CD4-positive, alpha-beta memory T cell (primary cell): ENCODE measurements at regions of chr3 and their contacts with region 1.

Region 1: GRCh38 chr3:196073188-196073838 is 8.6 kb downstream of the TFRC start:
- DNase-seq: peak; percentile 76 to 80 (median 78)
- H3K4me3 ChIP-seq: no peak overlapping the region
- H3K4me3 Mint-ChIP-seq: peak overlapping the region in 1 of 8 donors; percentile 16
- H3K27ac ChIP-seq: no peak overlapping the region
- H3K27ac Mint-ChIP-seq: peak overlapping the region; percentile 58 to 93 (median 78)
- H3K4me1 ChIP-seq: peaks cover 38% of the 10 kb centered on the region
- H3K4me1 Mint-ChIP-seq: peaks cover 24 to 32% (median 28%) of the 10 kb centered on the region in 4 donors
- H3K27me3 ChIP-seq: no peaks in the 10 kb centered on the region
- H3K27me3 Mint-ChIP-seq: no peaks in the 10 kb centered on the region

Region 2: DNA sequence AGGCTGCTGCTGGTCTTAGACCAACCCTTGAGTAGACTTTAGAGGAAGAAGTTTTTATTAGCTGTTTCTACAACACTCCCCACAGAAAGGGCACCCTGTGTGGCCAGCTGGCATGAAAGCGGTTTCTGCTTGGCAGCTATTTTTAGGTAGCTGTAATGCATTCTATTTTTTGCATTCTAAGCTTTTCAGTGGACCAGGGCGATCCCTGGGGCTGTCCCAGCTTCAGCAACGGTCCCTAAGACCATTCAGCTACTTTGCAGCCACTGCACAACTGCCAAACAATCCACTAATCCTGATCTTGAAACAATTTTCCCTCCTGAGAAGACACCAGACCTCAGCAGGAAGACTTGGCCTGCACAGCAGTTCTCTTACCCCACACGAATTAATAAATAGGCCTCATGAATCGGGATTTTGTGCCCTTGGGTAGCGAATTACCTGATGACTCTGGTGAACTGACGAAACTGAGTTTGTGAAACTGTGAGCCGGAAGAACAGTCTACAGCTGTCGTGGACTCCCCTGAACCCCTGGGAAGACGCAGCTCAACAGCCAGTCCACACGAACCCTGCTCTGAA is 23.2 kb after region 1 on chr3:
- CTCF ChIA-PET with region 1: interaction called, 12 read pairs
- POLR2A ChIA-PET with region 1: no interaction called
- intact Hi-C with region 1: no loop called
- DNase-seq: no peak
- H3K4me3 ChIP-seq: no peak overlapping the region
- H3K4me3 Mint-ChIP-seq: no peak overlapping the region
- H3K27ac ChIP-seq: no peak overlapping the region
- H3K27ac Mint-ChIP-seq: peak overlapping the region in 3 of 7 donors; percentile 22 to 81 (median 56)
- H3K4me1 ChIP-seq: peaks cover 9% of the 10 kb centered on the region
- H3K4me1 Mint-ChIP-seq: peaks cover 0 to 10% (median 6%) of the 10 kb centered on the region in 4 donors
- H3K27me3 ChIP-seq: no peaks in the 10 kb centered on the region
- H3K27me3 Mint-ChIP-seq: no peaks in the 10 kb centered on the region

Region 3: DNA sequence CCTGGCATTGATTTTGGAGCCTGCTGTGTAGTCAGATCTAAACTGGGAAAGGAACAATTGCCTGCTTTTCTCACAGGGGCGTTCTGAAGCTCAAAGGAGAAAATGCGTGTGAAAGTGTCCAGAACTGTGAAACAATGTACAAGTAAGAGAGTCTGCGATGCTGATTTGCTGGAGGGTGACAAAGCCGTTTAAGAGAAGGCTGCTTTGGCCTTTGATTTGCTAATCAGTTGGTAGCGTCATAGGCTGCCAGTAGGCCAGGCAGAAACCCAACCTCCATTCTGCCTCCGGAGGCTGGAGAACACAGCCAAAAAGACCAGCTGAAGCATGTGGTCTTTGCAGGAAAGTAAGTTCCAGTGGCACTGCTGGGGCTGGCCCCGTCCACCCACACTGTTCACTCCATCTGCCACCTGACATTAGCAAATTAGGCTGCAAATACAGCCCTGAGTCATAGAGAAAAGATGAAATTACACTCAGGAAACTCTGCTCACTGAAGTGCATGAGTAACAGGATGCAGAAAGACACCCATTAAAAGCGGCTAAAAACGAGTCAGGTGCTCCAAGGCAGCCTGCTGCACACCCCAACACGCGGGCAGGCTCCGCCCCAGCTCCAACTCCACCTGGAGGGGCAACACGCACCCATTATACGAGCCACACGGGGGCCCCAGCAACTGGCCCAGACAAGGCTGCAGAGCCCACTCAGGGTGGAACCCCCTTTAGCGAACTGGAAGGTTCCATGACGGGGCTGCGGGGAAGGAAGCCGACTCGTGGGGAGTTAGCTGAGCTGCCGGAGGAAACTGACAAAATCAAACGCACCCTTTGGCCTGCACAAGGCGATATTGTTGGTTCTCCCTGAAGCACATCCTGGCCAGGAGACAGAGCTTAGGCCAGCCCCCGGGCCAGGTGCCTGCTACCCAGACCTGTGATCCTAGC is 106.3 kb after region 1 on chr3:
- CTCF ChIA-PET with region 1: interaction called, 33 read pairs
- POLR2A ChIA-PET with region 1: interaction called, 124 read pairs
- intact Hi-C with region 1: loop called (anchors 1 kb)
- DNase-seq: peak; percentile 83 to 94 (median 85)
- H3K4me3 ChIP-seq: peak overlapping the region in 1 of 2 donors; percentile 34
- H3K4me3 Mint-ChIP-seq: peak overlapping the region; percentile 46 to 85 (median 78)
- H3K27ac ChIP-seq: peak overlapping the region; percentile 61
- H3K27ac Mint-ChIP-seq: peak overlapping the region; percentile 91 to 99 (median 98)
- H3K4me1 ChIP-seq: peaks cover 66% of the 10 kb centered on the region
- H3K4me1 Mint-ChIP-seq: peaks cover 34 to 64% (median 47%) of the 10 kb centered on the region in 4 donors
- H3K27me3 ChIP-seq: no peaks in the 10 kb centered on the region
- H3K27me3 Mint-ChIP-seq: no peaks in the 10 kb centered on the region

Region 4: DNA sequence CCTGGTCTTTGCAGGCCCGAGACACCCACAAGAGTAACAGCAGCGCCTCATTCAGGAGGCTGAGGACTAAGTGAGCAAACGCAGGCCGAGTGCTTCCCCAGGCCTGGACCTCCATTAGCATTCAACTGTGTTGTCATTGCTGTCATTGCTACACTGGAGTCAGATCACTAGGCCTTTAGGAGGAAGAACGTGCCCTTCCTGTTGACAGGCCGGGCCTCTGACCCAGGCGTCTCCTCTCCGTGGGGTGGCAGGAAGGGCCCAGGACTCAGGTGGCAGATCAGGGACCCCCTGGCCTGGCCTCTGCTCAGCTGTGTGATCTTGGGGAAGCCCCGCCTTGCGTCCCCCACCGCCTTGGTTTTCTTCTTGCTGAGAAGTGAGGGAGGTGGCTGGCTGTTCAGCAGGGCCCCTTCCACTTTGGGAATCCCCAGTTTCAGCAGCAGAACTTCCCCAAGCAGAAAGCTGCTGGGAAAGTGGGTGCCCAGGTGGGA is 118.8 kb after region 1 on chr3:
- CTCF ChIA-PET with region 1: interaction called, 569 read pairs
- POLR2A ChIA-PET with region 1: interaction called, 37 read pairs
- intact Hi-C with region 1: loop called (anchors 1 kb)
- DNase-seq: peak; percentile 47 to 83 (median 59)
- H3K4me3 ChIP-seq: peak overlapping the region in 1 of 2 donors; percentile 34
- H3K4me3 Mint-ChIP-seq: peak overlapping the region in 7 of 8 donors; percentile 33 to 85 (median 66)
- H3K27ac ChIP-seq: peak overlapping the region; percentile 75
- H3K27ac Mint-ChIP-seq: peak overlapping the region; percentile 95 to 99 (median 97)
- H3K4me1 ChIP-seq: peaks cover 47% of the 10 kb centered on the region
- H3K4me1 Mint-ChIP-seq: peaks cover 14 to 54% (median 22%) of the 10 kb centered on the region in 4 donors
- H3K27me3 ChIP-seq: no peaks in the 10 kb centered on the region
- H3K27me3 Mint-ChIP-seq: no peaks in the 10 kb centered on the region

Region 5: DNA sequence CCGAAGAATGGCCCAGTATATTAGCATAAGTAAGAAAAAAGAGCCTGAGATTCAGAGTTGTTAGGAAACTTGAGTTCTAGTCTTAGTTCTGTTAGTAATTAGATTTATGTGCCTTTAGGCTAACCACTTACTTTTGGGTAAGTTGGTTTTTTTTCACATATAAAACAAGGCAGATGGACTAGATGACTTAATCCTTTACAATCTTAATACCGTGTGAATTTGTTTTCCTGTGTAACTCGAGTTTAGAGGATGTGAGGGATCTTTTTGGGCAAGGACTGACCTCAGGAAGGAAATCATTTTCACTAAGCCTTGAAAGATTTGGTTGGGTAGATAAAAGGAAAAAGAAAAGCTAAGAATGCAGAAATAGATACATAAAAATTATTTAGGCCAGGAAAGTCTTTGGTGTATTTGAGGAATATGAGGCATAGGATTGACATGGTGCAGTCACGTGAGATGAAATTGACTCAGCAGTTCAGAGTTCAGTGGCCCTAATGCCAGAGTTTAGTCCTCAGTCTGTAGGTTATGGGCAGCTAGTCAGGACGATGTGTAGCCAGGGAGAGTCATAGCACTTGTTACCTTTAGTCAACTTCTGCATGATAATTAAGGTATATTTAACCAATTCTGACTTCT is 701.0 kb after region 1 on chr3:
- CTCF ChIA-PET with region 1: no interaction called
- POLR2A ChIA-PET with region 1: no interaction called
- intact Hi-C with region 1: no loop called
- DNase-seq: no peak
- H3K4me3 ChIP-seq: no peak overlapping the region
- H3K4me3 Mint-ChIP-seq: peak overlapping the region in 6 of 8 donors; percentile 22 to 76 (median 44)
- H3K27ac ChIP-seq: no peak overlapping the region
- H3K27ac Mint-ChIP-seq: peak overlapping the region; percentile 7 to 89 (median 87)
- H3K4me1 ChIP-seq: peaks cover 69% of the 10 kb centered on the region
- H3K4me1 Mint-ChIP-seq: peaks cover 61 to 93% (median 76%) of the 10 kb centered on the region in 4 donors
- H3K27me3 ChIP-seq: no peaks in the 10 kb centered on the region
- H3K27me3 Mint-ChIP-seq: no peaks in the 10 kb centered on the region